Activated CD8-positive, alpha-beta memory T cell treated with anti-CD3 and anti-CD28 coated beads, Interleukin-2, amount 10 ng/mL, durations not matched to agents 7 days and 5 days (primary cell): ENCODE measurements at regions of chr3 and their contacts with region 1.

Region 1: DNA sequence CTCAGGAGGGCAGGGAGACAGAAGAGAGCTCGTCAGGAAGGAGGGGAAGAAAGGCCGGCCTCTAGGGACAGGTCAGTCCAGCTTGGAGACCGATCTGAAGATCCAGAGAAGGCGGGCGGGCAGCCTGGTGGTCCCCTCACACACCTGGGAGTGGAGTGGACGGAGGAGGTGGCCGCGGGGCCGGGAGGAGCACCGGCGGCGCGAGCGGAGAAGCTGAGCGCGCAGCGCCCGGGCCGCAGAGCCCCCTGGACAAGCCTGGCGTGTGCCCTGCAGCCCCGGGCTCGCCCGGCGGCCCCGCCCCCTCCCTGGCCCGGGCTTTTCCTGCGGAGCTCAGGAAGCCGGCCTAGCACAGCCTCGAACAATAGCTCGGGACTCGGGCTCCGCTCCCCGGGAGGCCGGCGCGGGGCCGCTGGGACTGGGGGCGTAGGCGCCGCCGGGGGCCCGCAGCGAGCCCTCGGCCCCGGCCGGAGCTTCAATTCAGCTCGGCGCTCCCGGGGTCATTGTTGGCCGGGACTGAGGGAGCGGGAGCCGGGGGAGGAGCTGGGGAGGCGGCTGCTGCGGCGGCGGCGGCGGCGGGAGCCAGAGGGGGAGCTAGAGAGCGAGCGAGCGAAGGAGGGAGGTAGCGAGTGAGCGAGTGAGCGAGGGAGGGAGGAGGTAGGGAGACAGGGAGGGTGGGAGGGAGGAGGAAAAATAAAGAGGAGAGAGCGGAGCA is 40.9 kb upstream of the ROPN1 start:
- DNase-seq: peak; percentile 71
- ATAC-seq: peak; percentile 92
- H3K4me3 Mint-ChIP-seq: peak overlapping the region; percentile 53
- H3K27ac Mint-ChIP-seq: no peak overlapping the region
- H3K4me1 Mint-ChIP-seq: peaks cover 13% of the 10 kb centered on the region
- H3K27me3 Mint-ChIP-seq: peaks cover 52% of the 10 kb centered on the region

Region 2: GRCh38 chr3:124019291-124019690 is 13.5 kb before region 1 on chr3:
- CTCF ChIA-PET with region 1: interaction called, 17 read pairs
- DNase-seq: no peak
- ATAC-seq: no peak
- H3K4me3 Mint-ChIP-seq: no peak overlapping the region
- H3K27ac Mint-ChIP-seq: no peak overlapping the region
- H3K4me1 Mint-ChIP-seq: no peaks in the 10 kb centered on the region
- H3K27me3 Mint-ChIP-seq: peaks cover 41% of the 10 kb centered on the region

Region 3: GRCh38 chr3:124078953-124079911 is 46.4 kb after region 1 on chr3:
- CTCF ChIA-PET with region 1: interaction called, 19 read pairs
- DNase-seq: no peak
- ATAC-seq: no peak
- H3K4me3 Mint-ChIP-seq: no peak overlapping the region
- H3K27ac Mint-ChIP-seq: no peak overlapping the region
- H3K4me1 Mint-ChIP-seq: no peaks in the 10 kb centered on the region
- H3K27me3 Mint-ChIP-seq: peaks cover 23% of the 10 kb centered on the region

Region 4: GRCh38 chr3:124229420-124229819 is 196.6 kb after region 1 on chr3:
- CTCF ChIA-PET with region 1: no interaction called
- DNase-seq: no peak
- ATAC-seq: no peak
- H3K4me3 Mint-ChIP-seq: no peak overlapping the region
- H3K27ac Mint-ChIP-seq: no peak overlapping the region
- H3K4me1 Mint-ChIP-seq: no peaks in the 10 kb centered on the region
- H3K27me3 Mint-ChIP-seq: peaks cover 10% of the 10 kb centered on the region

Region 5: DNA sequence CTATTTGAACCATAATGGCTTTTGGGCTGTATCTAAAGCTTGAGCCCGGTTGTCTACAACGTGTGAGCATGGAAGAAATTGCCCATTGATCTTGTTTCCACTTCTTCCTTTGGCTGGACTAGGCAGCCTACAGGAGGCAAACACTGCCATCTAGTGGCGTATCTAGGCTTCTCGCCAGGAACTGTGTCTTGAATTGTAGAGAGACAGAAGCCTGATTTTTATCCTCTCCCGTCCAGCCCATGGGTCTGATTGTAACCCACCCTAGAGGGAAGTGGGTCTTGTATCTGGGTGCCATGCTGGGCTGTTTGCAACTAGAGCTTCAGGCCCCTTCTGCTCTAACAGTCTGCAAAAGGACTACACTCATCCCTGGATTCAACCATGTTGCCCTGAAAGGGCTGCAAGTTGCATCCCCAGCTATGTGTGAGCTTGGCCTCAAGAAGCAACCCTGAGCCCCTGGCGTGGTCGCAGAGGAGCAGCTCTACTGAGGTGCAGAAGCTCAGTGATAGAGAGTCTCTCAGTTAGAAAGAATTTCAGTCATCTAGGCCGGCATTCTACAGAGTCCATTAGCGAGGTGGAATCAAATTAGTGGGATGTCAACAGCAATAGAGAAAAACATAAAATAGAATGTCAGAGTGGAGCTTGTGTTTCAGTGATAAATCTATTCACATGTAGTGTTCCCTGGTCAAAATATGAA is 527.2 kb after region 1 on chr3:
- CTCF ChIA-PET with region 1: no interaction called
- DNase-seq: peak; percentile 72
- ATAC-seq: peak; percentile 74
- H3K4me3 Mint-ChIP-seq: no peak overlapping the region
- H3K27ac Mint-ChIP-seq: no peak overlapping the region
- H3K4me1 Mint-ChIP-seq: no peaks in the 10 kb centered on the region
- H3K27me3 Mint-ChIP-seq: peaks cover 69% of the 10 kb centered on the region